K562 (cell line): ENCODE measurements at regions of chr3 and their contacts with region 1.

Region 1: DNA sequence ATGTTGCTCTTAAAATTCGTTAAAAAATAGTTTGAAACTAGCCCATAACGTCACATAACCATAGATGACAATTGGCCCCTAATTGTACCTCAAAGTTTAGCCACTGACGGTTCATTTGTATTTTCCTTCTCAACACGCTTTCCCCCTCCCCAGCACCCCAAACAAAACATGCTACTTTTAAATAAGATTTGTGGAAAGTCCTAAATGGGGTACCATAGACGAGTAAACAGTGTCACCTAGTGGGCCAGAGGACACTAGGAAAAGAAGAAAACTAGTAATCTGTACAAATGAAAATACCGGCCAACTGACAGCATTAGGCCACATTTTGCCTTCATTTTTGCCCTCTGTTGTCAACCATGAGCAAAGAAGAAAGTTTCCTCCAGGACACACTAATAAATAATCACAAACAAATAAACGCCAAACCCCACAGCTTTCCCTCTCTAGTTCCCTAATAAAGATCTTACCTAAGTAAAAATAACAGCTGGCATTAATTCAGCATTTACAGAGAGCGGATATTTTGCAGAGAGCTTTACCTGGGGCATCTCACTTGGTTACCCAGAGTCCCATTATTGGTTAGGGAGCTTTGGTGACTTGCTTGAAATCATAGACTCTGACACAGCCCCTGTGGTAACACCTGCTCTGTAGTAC is 175.1 kb upstream of the ATP11B start:
- DNase-seq: peak in 2 of 4 experiments; percentile 14 to 43
- ATAC-seq: peak; percentile 72
- H3K4me3 ChIP-seq: no peak overlapping the region
- H3K27ac ChIP-seq: no peak overlapping the region
- H3K4me1 ChIP-seq: no peaks in the 10 kb centered on the region
- H3K27me3 ChIP-seq: peaks cover 0 to 4% of the 10 kb centered on the region in 2 experiments; a peak in 1 of 5 replicates
- CTCF ChIP-seq: peak; percentile 47 to 83 (median 74); a peak in 5 of 6 replicates
- EP300 ChIP-seq: no peak
- POLR2A ChIP-seq: no peak
- RAD21 ChIP-seq: peak; percentile 74 to 91

Region 2: DNA sequence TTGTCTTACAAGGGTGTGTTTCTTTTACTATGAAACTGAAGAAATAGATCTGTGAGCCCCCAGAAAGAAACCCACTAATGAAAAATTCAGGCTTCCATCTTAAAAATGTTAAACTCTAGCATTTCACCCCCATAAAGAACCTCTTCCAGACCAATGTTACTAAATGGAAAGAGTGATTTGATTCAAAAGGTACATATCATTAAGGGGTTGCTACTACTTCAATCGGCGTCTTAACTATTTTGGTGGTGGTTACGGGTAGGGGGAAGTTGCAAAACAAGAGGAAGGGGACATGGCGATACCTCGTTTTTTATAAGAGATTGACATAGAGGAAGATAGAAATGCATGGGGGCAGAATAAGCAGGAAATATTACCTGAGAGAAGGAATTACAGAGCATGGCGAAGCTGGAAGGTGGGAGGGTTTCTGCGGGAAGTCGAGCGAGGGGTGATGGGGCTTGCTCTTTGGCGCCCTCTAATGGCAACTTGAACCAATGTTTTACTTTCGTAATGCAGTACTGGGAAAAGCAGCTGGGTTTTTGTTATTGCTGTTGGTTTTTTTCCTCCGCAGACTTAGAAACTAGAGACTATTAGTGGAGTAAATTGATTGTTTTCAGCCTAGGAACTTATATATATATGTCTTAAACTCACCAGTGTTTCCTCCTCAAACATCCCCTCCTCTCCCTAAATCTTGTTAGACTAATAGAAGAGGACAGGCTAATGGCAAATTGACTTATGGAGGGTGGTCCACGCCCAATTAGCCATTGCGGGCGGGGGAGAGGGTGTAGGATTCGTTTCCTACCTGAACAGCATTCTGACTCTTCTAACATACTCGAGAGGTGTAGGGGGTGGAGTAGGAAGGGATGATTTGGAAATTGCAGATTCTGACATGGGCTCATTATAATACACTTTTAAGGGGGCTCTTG is 917.8 kb before region 1 on chr3:
- CTCF ChIA-PET with region 1: no interaction called
- POLR2A ChIA-PET with region 1: no interaction called
- in situ Hi-C with region 1: loop called (anchors 10 kb)
- intact Hi-C with region 1: no loop called
- DNase-seq: peak; percentile 72 to 75 (median 73)
- ATAC-seq: peak; percentile 88
- H3K4me3 ChIP-seq: no peak overlapping the region
- H3K27ac ChIP-seq: no peak overlapping the region
- H3K4me1 ChIP-seq: peaks cover 0 to 13% of the 10 kb centered on the region in 2 experiments; a peak in 2 of 5 replicates
- H3K27me3 ChIP-seq: peaks cover 11 to 27% of the 10 kb centered on the region in 2 experiments; a peak in 4 of 5 replicates
- CTCF ChIP-seq: peak; percentile 74 to 80 (median 77)
- EP300 ChIP-seq: no peak
- POLR2A ChIP-seq: no peak
- RAD21 ChIP-seq: peak; percentile 32 to 54; a peak in 3 of 4 replicates

Region 3: DNA sequence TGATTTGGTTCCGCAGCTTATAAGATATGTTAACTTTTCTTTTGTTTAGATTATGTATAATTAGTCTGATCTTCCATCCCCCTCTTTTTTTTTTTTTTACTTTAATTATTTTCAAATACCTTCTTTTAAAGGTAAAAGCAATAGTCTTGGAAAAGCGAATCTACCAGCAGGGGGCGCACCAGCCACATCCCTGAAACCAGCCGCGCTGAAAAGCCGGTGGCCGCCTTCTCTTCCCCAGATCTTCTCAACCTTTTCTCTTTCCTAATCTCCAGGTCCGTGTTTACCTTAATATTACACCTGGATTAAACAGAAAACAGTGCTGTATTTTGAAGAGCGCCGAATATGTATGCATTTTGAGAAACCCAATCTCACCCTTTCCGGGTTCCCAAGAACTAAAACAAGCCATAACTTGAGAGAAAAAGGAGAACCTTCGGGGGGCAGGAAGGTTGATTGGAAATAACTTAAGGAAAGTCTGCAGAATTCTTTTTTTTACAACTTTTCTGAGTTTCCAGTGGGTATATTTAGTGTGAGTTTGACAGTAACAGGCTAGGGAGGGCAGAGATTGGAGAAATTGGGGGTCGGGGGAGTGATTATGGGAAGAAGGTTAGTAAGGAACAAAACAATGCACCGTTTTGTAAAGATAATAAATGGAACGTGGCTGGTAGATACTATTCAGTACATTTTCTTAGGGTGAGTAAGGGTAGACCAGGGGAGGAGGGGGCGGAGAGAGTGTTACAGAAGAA is 908.5 kb before region 1 on chr3:
- CTCF ChIA-PET with region 1: interaction called, 4 read pairs
- POLR2A ChIA-PET with region 1: no interaction called
- in situ Hi-C with region 1: loop called (anchors 10 kb)
- intact Hi-C with region 1: loop called (anchors 2 kb)
- DNase-seq: peak; percentile 51 to 72 (median 56)
- ATAC-seq: peak; percentile 82
- H3K4me3 ChIP-seq: no peak overlapping the region
- H3K27ac ChIP-seq: no peak overlapping the region
- H3K4me1 ChIP-seq: peaks cover 0 to 4% of the 10 kb centered on the region in 2 experiments; a peak in 2 of 5 replicates
- H3K27me3 ChIP-seq: peaks cover 2 to 16% of the 10 kb centered on the region in 2 experiments; a peak in 3 of 5 replicates
- CTCF ChIP-seq: peak; percentile 60 to 77 (median 67)
- EP300 ChIP-seq: no peak
- POLR2A ChIP-seq: no peak
- RAD21 ChIP-seq: peak; percentile 70 to 79

Region 4: GRCh38 chr3:182258538-182259177 is 359.6 kb before region 1 on chr3:
- CTCF ChIA-PET with region 1: no interaction called
- POLR2A ChIA-PET with region 1: no interaction called
- in situ Hi-C with region 1: no loop called
- intact Hi-C with region 1: loop called (anchors 5 kb)
- DNase-seq: peak in 1 of 4 experiments; percentile 29
- ATAC-seq: 0 out of 3 replicates have a peak, but pooled peaks have one; percentile 49
- H3K4me3 ChIP-seq: no peak overlapping the region
- H3K27ac ChIP-seq: no peak overlapping the region
- H3K4me1 ChIP-seq: peaks cover 0 to 3% of the 10 kb centered on the region in 2 experiments; a peak in 1 of 5 replicates
- H3K27me3 ChIP-seq: no peaks in the 10 kb centered on the region
- CTCF ChIP-seq: peak in 2 of 3 experiments; percentile 22 to 57; a peak in 2 of 6 replicates
- EP300 ChIP-seq: no peak
- POLR2A ChIP-seq: no peak
- RAD21 ChIP-seq: peak; percentile 70

Region 5: DNA sequence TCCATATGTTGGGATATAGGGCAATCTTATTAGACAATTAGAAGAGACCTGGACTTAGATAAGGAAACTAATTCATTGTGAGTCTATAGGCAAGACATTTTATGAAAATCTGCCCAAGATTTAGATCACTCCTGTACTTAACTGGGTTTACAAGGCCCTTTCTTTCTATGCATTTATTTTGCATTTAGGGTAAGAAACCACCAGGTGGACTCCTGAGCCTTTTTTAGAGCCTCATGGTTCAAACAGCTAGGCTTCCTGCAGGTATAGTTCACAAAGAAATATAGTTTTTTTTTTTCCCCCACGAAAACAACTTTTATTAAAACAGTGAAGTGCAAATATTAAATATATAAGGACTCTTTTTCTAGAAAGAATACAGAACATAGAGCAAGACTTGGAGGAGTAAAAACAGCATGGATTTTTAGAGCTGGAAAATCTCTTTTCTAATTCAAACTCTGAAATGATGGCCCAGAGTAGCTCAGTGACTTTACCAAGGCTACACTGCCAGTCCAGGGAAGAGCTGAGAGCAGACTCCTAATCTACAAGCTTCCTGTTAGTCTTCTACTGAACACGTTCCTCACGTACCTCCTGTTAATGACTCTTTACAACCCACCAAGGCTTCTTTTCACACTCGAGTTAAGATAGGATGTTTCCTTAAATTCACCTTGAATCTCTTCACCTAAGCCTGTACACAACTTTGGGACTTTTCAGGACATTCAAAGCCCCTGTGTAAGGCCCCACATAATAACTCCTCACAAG is 225.8 kb before region 1 on chr3:
- CTCF ChIA-PET with region 1: no interaction called
- POLR2A ChIA-PET with region 1: no interaction called
- in situ Hi-C with region 1: no loop called
- intact Hi-C with region 1: loop called (anchors 5 kb)
- DNase-seq: peak in 2 of 4 experiments; percentile 14 to 16
- ATAC-seq: peak; percentile 67
- H3K4me3 ChIP-seq: no peak overlapping the region
- H3K27ac ChIP-seq: peak overlapping the region; percentile 67; the same call in 2 of the 3 replicates
- H3K4me1 ChIP-seq: peaks cover 2 to 24% of the 10 kb centered on the region in 2 experiments; a peak in 3 of 5 replicates
- H3K27me3 ChIP-seq: no peaks in the 10 kb centered on the region
- CTCF ChIP-seq: peak in 2 of 3 experiments; percentile 24 to 50; a peak in 2 of 6 replicates
- EP300 ChIP-seq: no peak
- POLR2A ChIP-seq: no peak
- RAD21 ChIP-seq: peak; percentile 36 to 55

Region 6: DNA sequence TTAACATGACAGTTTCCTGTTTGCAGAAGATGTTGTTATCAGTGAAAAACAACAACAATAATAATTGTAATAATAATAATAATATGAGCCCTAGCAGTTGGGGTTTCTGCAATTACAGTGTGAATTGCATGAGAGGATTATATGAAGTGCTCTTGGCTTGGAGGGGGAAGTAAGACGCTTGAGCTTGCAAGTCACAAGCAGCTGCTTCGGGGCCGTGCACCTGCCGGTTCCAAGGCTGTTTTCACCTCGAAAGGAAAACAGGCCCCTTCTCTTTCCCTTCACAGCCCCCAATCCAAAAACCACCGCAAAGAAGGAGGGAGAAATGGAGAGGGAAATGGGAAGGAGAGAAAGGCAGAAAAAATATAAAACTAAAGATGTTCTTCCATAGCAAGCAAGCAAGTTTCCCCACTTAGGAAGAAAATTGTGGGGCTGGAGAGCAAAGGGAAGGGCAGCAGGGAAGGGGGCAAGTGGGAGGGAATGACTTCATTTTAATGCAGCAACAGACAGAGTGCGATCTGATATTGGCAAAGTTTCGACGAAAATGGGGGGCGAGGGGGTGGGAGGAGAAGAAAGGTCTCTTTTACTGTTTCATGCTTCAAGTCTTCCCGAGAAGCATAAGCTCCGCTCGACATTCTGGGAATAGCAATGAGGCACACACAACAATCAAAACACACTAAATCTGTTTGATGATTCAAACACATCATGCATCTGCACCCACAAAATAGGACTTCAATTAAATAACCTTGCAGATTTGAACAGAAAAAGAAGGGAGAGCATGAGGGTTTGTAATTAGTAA is 109.1 kb before region 1 on chr3:
- CTCF ChIA-PET with region 1: no interaction called
- POLR2A ChIA-PET with region 1: no interaction called
- in situ Hi-C with region 1: no loop called
- intact Hi-C with region 1: loop called (anchors 5 kb)
- DNase-seq: no peak
- ATAC-seq: no peak
- H3K4me3 ChIP-seq: no peak overlapping the region
- H3K27ac ChIP-seq: no peak overlapping the region
- H3K4me1 ChIP-seq: no peaks in the 10 kb centered on the region
- H3K27me3 ChIP-seq: peaks cover 0 to 14% of the 10 kb centered on the region in 2 experiments; a peak in 3 of 5 replicates
- CTCF ChIP-seq: no peak
- EP300 ChIP-seq: no peak
- POLR2A ChIP-seq: no peak
- RAD21 ChIP-seq: no peak

Region 7: GRCh38 chr3:182544542-182544941 is 73.7 kb before region 1 on chr3:
- CTCF ChIA-PET with region 1: no interaction called
- POLR2A ChIA-PET with region 1: no interaction called
- in situ Hi-C with region 1: no loop called
- intact Hi-C with region 1: no loop called
- DNase-seq: no peak
- ATAC-seq: no peak; the same call in 2 of the 3 replicates
- H3K4me3 ChIP-seq: no peak overlapping the region
- H3K27ac ChIP-seq: no peak overlapping the region
- H3K4me1 ChIP-seq: no peaks in the 10 kb centered on the region
- H3K27me3 ChIP-seq: peaks cover 4 to 6% of the 10 kb centered on the region in 2 experiments; a peak in 3 of 5 replicates
- CTCF ChIP-seq: no peak
- EP300 ChIP-seq: no peak
- POLR2A ChIP-seq: no peak
- RAD21 ChIP-seq: no peak

Region 8: DNA sequence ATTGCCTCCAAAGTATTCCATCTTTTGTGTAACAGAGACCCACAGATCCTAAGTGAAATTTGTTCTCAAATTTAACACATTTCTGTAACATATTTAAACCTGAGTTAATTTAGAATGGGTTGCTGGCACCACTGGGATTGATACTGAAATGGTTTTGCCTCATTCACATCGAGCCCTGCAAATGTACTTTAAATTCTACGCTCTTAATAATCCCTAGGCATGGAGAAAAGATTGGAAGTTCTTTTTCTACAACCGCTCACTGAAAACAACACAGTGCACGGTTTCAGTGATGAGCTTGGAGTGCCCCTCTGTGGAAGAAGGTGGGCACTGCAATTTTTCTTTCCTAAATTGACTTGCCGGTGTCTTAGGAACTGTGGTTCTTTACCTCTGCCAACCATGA is 65.2 kb after region 1 on chr3:
- CTCF ChIA-PET with region 1: no interaction called
- POLR2A ChIA-PET with region 1: no interaction called
- in situ Hi-C with region 1: no loop called
- intact Hi-C with region 1: loop called (anchors 5 kb)
- DNase-seq: peak; percentile 67 to 79 (median 69)
- ATAC-seq: peak; percentile 84
- H3K4me3 ChIP-seq: no peak overlapping the region
- H3K27ac ChIP-seq: no peak overlapping the region
- H3K4me1 ChIP-seq: peaks cover 0 to 10% of the 10 kb centered on the region in 2 experiments; a peak in 2 of 5 replicates
- H3K27me3 ChIP-seq: 0 out of 5 replicates have a peak, but pooled peaks cover 0 to 4% of the 10 kb centered on the region in 2 experiments
- CTCF ChIP-seq: peak; percentile 81 to 96 (median 91)
- EP300 ChIP-seq: no peak
- POLR2A ChIP-seq: no peak
- RAD21 ChIP-seq: peak; percentile 85 to 93